AG04450 (cell line): ENCODE measurements at regions of chr6 and their contacts with region 1.

Region 1: GRCh38 chr6:110873981-110874879 is at the start of gene AMD1:
- DNase-seq: peak; percentile 96
- H3K4me3 ChIP-seq: peak within 1 kb of the TSS; percentile 88
- H3K27ac ChIP-seq: peak within 1 kb of the TSS; percentile 96
- H3K27me3 ChIP-seq: no peaks in the 10 kb centered on the region
- CTCF ChIP-seq: no peak
- polyA plus RNA-seq, gene AMD1: 58.0 and 84.5 TPM in 2 replicates

Region 2: GRCh38 chr6:110682460-110682853 is 191.8 kb before region 1 on chr6:
- CTCF ChIA-PET with region 1: interaction called, 27 read pairs
- POLR2A ChIA-PET with region 1: interaction called, 26 read pairs
- DNase-seq: peak; percentile 47
- H3K4me3 ChIP-seq: no peak overlapping the region
- H3K27ac ChIP-seq: no peak overlapping the region
- H3K27me3 ChIP-seq: no peaks in the 10 kb centered on the region
- CTCF ChIP-seq: peak; percentile 74

Region 3: GRCh38 chr6:110761371-110761770 is 112.9 kb before region 1 on chr6:
- CTCF ChIA-PET with region 1: no interaction called
- POLR2A ChIA-PET with region 1: no interaction called
- DNase-seq: no peak
- H3K4me3 ChIP-seq: no peak overlapping the region
- H3K27ac ChIP-seq: no peak overlapping the region
- H3K27me3 ChIP-seq: no peaks in the 10 kb centered on the region
- CTCF ChIP-seq: no peak

Region 4: DNA sequence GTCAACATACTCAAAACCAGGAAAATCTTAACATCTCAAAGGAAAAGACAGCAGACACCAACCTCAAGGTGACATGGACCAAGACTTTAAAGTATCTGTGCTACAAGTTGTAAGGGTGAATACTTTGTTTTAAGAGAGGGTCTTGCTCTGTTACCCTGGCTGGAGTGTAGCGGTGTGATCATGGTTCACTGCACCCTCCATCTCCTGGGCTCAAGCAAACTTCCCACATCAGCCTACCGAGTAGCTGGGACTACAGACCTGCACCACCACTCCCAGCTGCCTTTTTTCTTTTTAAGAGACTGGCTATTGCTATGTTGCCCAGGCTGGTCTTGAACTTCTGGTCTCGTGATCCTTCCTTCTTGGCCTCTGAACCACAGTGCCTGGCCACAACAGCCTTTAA is 10.1 kb after region 1 on chr6:
- CTCF ChIA-PET with region 1: interaction called, 4 read pairs
- POLR2A ChIA-PET with region 1: interaction called, 18 read pairs
- DNase-seq: no peak
- H3K4me3 ChIP-seq: no peak overlapping the region
- H3K27ac ChIP-seq: no peak overlapping the region
- H3K27me3 ChIP-seq: no peaks in the 10 kb centered on the region
- CTCF ChIP-seq: no peak

Region 5: GRCh38 chr6:110958329-110959192 is 84.3 kb after region 1 on chr6 and contains the start of gene GTF3C6:
- CTCF ChIA-PET with region 1: interaction called, 3 read pairs
- POLR2A ChIA-PET with region 1: interaction called, 35 read pairs
- DNase-seq: peak; percentile 81
- H3K4me3 ChIP-seq: peak within 1 kb of the TSS; percentile 92
- H3K27ac ChIP-seq: peak within 1 kb of the TSS; percentile 93
- H3K27me3 ChIP-seq: no peaks in the 10 kb centered on the region
- CTCF ChIP-seq: no peak
- polyA plus RNA-seq, gene GTF3C6: 49.2 and 65.7 TPM in 2 replicates

Region 6: GRCh38 chr6:111651185-111652034 is 777.2 kb after region 1 on chr6:
- CTCF ChIA-PET with region 1: no interaction called
- POLR2A ChIA-PET with region 1: no interaction called
- DNase-seq: no peak
- H3K4me3 ChIP-seq: no peak overlapping the region
- H3K27ac ChIP-seq: no peak overlapping the region
- H3K27me3 ChIP-seq: no peaks in the 10 kb centered on the region
- CTCF ChIP-seq: no peak